Spleen (tissue), 13 donors: ENCODE measurements at regions of chr21 and their contacts with region 1.

Region 1: GRCh38 chr21:42818328-42818749 is 61.0 kb downstream of the WDR4 start:
- DNase-seq: peak; percentile 88
- H3K4me3 ChIP-seq: no peak overlapping the region
- H3K27ac ChIP-seq: no peak overlapping the region
- H3K4me1 ChIP-seq: peaks cover 0 to 7% (median 0%) of the 10 kb centered on the region in 6 donors
- H3K27me3 ChIP-seq: peaks cover 0 to 16% (median 0%) of the 10 kb centered on the region in 7 donors
- CTCF ChIP-seq: peak; percentile 80 to 97 (median 91)
- POLR2A ChIP-seq: no peak

Region 2: DNA sequence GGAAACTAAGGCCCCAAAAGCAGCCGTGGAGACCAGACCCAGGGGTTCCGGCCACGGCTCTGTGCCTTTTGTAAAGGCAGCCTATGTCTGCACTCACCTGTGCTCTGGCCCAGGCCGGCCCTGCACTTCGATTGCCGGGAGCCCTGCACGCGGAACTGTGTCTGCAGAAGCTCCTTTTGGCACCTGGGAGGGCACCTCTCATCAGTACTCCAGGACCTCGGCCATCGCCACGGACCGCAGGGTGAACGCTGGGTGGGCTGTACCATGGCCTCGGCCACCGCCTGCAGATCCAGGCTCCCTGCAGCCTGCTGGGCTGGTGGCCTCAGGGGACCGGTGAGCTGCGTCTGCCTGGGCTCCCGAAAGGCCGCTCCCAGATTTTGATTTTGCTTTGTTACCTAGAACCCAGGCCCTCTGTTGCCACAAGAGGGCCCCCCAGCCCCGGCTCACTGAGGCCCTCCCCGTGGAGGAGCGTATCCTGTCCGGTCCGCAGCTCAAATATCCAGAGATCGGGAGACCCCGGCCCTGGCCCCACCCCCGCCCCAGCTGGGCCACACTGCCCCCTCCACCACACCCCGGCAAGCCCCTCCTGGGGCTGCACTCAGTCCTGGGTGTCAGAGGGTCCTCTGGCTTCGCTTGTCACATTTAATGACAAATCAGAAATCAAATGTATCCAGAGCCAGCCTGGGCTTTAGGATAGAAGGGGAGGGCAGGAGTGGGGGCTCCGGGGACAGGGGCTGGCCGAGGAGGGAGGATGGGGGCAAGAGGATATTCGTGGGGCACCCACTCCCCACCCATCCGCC is 225.1 kb before region 1 on chr21:
- intact Hi-C with region 1: loop called (anchors 5 kb)
- DNase-seq: peak; percentile 90
- H3K4me3 ChIP-seq: peak overlapping the region in 1 of 8 donors; percentile 42
- H3K27ac ChIP-seq: no peak overlapping the region
- H3K4me1 ChIP-seq: peaks cover 0 to 24% (median 17%) of the 10 kb centered on the region in 6 donors
- H3K27me3 ChIP-seq: peaks cover 0 to 42% (median 0%) of the 10 kb centered on the region in 7 donors
- CTCF ChIP-seq: peak; percentile 44 to 81 (median 66)
- POLR2A ChIP-seq: no peak

Region 3: DNA sequence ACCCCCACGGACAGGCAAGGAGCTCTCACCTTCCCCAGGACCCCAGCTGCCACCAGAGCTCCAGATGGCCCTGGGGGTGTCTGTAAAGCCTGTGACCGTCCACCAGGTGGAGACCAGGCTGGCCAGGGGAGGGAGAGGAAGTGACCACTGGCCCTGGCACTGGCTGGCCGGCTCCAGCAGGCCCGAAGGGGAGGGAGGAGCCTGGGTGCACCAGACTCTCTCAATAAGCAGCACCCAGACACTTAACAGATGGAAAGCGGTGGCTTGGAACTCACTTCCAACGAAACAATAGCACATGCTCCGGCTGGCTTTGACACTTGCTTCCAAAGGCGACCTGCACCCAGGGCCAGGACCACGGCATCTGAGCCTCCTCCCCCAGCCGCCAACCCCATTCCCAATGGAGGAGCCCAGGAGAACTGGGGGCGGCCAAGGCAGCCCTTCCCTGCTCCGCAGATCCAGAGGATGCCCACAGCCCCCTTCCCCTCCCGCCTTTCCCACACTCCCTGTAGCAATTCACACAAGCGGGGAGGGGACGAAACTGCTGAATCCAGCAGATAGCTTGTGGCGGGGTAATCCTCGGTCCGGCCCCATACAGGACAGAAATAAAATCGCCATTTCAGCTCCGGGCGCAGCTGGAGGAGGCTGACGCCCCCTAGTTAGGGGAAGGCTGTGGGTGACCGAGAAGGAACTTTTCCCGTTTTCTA is 165.7 kb before region 1 on chr21:
- intact Hi-C with region 1: loop called (anchors 5 kb)
- DNase-seq: peak; percentile 85
- H3K4me3 ChIP-seq: peak overlapping the region; percentile 5 to 79 (median 24)
- H3K27ac ChIP-seq: peak overlapping the region in 5 of 8 donors; percentile 64 to 81 (median 76)
- H3K4me1 ChIP-seq: peaks cover 8 to 54% (median 44%) of the 10 kb centered on the region in 6 donors
- H3K27me3 ChIP-seq: peaks cover 0 to 70% (median 21%) of the 10 kb centered on the region in 7 donors
- CTCF ChIP-seq: peak; percentile 40 to 81 (median 61)
- POLR2A ChIP-seq: no peak